GM10248 (cell line): ENCODE measurements at regions of chr11 and their contacts with region 1.

Region 1: DNA sequence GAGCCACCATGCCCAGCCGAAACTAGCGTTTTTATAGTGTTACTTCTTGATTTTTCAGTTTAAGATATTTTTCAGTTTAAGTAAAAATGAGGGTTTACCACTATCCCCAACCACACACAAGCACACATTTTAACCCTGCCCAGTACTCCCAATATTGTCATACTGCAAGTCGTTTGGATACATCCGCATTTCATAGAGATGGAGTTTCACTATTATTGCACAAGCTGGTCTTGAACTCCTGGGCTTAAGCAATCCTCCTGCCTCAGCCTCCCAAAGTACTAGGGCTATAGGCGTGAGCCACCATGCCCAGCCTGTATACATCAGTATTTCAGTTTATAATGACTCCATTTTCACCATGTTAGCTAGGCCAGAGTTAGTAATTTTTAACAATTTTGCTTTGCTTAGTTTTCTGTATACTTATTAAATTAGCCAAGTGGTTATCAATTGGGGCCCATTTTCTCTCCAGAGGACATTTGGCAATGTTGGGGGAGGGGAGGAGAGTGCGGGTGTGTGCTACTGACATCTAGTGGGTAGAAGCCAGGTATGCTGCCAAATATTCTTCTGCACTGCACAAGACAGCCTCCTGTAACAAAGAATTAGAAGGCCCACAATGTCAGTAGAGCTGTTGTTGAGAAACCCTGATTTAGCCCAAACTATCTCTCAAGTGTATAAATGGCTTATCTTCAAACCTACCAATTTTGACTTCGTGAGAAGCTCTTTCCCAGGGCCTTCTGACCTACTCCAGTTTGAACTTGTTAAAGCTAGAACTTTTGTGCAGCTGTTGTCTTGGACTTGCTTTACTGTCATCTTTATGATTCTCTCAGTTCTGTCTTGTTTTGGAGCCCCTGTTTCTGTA is 7.3 kb downstream of the USP47 start:
- DNase-seq: peak; percentile 38
- CTCF ChIP-seq: peak; percentile 67

Region 2: GRCh38 chr11:11722861-11723260 is 126.3 kb before region 1 on chr11:
- CTCF ChIA-PET with region 1: no interaction called
- POLR2A ChIA-PET with region 1: no interaction called
- DNase-seq: no peak
- CTCF ChIP-seq: no peak

Region 3: GRCh38 chr11:11816511-11817319 is 32.4 kb before region 1 on chr11:
- CTCF ChIA-PET with region 1: no interaction called
- POLR2A ChIA-PET with region 1: no interaction called
- DNase-seq: no peak
- CTCF ChIP-seq: no peak

Region 4: GRCh38 chr11:11827272-11827671 is 21.8 kb before region 1 on chr11:
- CTCF ChIA-PET with region 1: no interaction called
- POLR2A ChIA-PET with region 1: no interaction called
- DNase-seq: no peak
- CTCF ChIP-seq: no peak

Region 5: DNA sequence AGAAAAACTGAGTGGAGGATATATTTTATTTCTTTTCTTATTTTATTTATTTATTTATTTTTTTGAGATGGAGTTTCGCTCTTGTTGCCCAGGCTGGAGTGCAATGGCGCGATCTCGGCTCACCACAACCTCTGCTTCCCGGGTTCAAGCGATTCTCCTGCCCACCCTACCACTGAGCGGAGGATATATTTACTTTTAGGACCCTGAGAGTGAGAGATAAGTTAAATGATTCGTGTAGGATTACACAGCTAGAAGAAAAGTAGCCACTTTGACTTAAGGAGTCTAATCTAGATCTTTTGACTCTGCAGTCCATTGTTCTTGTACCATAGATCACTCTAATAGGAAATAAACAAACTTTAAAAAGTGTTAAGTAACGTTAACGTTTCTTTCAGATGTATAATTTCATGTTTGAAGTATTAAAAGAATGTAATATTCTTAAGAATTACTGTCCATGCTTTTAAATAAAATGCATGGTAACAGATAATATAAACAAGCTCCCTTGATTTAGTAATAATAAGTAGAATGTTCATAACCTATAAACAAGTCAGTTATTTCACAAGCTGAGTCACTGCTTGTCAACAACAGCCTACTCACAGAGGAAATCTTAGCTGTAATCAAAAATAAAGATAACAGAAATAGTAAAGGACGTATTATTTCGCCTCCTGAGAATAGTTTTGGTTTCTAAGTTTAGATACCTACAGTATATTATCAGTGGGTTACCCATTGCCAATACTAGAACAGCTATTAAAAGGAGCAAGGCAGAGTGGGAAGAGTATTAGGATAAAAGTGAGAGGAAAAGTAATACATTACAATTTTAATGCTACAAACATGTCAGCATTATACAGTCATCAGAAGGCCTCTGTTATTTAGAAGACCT is 11.2 kb after region 1 on chr11:
- CTCF ChIA-PET with region 1: interaction called, 18 read pairs
- POLR2A ChIA-PET with region 1: no interaction called
- DNase-seq: no peak
- CTCF ChIP-seq: no peak

Region 6: DNA sequence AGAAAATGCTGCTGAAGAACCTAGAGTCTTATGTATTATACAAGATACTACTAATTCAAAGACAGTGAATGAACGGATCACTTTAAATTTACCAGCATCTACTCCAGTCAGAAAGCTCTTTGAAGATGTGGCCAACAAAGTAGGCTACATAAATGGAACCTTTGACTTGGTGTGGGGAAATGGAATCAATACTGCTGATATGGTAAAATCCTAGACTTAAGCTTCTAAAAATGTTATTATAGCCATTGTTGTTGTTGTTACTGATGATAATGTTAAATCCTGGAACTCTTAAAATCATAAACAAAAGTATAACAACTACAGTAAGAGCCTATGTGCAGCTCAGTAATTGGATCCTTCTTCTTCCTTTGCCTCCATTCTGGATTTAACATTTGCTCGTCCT is 31.1 kb after region 1 on chr11:
- CTCF ChIA-PET with region 1: interaction called, 11 read pairs
- POLR2A ChIA-PET with region 1: no interaction called
- DNase-seq: no peak
- CTCF ChIP-seq: no peak

Region 7: GRCh38 chr11:11916981-11917399 is 67.9 kb after region 1 on chr11:
- CTCF ChIA-PET with region 1: no interaction called
- POLR2A ChIA-PET with region 1: no interaction called
- DNase-seq: no peak
- CTCF ChIP-seq: no peak